Activated naive CD4-positive, alpha-beta T cell treated with anti-CD3 and anti-CD28 coated beads for 36 hours (primary cell): ENCODE measurements at regions of chr3 and their contacts with region 1.

Region 1: GRCh38 chr3:102229062-102229655 is 205.7 kb upstream of the ZPLD1 start:
- DNase-seq: peak; percentile 88
- H3K4me3 Mint-ChIP-seq: no peak overlapping the region
- H3K27ac Mint-ChIP-seq: no peak overlapping the region
- H3K4me1 Mint-ChIP-seq: peaks cover 16% of the 10 kb centered on the region
- H3K27me3 Mint-ChIP-seq: no peaks in the 10 kb centered on the region

Region 2: DNA sequence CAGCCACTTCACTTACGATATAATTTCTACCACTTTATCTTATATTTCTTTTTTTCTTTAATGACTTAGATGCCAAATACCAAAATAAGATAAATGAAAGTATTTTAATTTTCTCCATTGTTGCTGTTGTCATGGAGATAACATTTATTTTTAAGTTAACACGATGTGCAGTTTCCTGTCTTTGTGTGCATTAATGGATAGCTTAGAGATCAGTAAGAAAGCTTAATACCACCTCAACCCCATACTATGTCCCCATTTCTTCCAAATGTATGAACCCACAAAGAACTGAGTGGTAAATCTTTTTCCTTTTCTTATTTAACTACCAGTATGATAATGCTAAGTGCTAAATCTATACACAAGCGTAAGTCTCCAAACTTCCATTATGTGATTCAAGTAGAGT is 638.1 kb before region 1 on chr3:
- CTCF ChIA-PET with region 1: no interaction called
- intact Hi-C with region 1: no loop called
- DNase-seq: no peak
- H3K4me3 Mint-ChIP-seq: no peak overlapping the region
- H3K27ac Mint-ChIP-seq: peak overlapping the region; percentile 30
- H3K4me1 Mint-ChIP-seq: peaks cover 13% of the 10 kb centered on the region
- H3K27me3 Mint-ChIP-seq: no peaks in the 10 kb centered on the region

Region 3: DNA sequence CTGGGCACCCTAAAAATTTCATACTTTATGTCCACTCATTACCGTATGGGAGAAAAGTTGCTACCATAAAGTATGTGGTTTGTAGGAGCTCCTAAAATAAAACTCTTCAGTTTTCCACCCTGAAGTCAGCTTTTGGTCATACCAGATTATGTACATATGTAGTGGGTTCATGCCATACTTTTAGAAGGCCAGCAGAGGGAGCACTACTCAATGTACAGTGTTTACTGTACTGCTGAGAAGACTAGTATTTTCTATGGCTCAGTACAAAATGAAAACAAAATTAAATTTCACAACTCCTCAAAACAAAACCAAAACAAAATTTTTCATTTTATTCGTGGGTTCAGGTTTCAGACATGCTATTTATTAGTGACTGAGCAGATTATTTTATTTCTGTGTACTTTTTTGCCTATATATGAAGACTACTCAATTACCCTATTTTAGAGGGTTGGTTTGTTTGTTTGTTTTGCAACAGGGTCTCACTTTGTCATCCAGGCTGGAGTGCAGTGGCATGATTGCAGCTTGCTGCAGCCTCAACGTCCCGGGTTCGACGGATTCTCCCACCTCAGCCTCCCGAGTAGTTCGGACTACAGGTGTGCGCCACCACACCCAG is 425.9 kb before region 1 on chr3:
- CTCF ChIA-PET with region 1: interaction called, 380 read pairs
- intact Hi-C with region 1: no loop called
- DNase-seq: peak; percentile 76
- H3K4me3 Mint-ChIP-seq: no peak overlapping the region
- H3K27ac Mint-ChIP-seq: peak overlapping the region; percentile 50
- H3K4me1 Mint-ChIP-seq: peaks cover 37% of the 10 kb centered on the region
- H3K27me3 Mint-ChIP-seq: no peaks in the 10 kb centered on the region

Region 4: GRCh38 chr3:101821503-101821902 is 407.7 kb before region 1 on chr3:
- CTCF ChIA-PET with region 1: interaction called, 13 read pairs
- intact Hi-C with region 1: no loop called
- DNase-seq: no peak
- H3K4me3 Mint-ChIP-seq: no peak overlapping the region
- H3K27ac Mint-ChIP-seq: no peak overlapping the region
- H3K4me1 Mint-ChIP-seq: peaks cover 53% of the 10 kb centered on the region
- H3K27me3 Mint-ChIP-seq: no peaks in the 10 kb centered on the region

Region 5: GRCh38 chr3:101995371-101996046 is 233.7 kb before region 1 on chr3:
- CTCF ChIA-PET with region 1: interaction called, 4 read pairs
- intact Hi-C with region 1: loop called (anchors 2 kb)
- DNase-seq: no peak
- H3K4me3 Mint-ChIP-seq: no peak overlapping the region
- H3K27ac Mint-ChIP-seq: no peak overlapping the region
- H3K4me1 Mint-ChIP-seq: peaks cover 32% of the 10 kb centered on the region
- H3K27me3 Mint-ChIP-seq: no peaks in the 10 kb centered on the region

Region 6: DNA sequence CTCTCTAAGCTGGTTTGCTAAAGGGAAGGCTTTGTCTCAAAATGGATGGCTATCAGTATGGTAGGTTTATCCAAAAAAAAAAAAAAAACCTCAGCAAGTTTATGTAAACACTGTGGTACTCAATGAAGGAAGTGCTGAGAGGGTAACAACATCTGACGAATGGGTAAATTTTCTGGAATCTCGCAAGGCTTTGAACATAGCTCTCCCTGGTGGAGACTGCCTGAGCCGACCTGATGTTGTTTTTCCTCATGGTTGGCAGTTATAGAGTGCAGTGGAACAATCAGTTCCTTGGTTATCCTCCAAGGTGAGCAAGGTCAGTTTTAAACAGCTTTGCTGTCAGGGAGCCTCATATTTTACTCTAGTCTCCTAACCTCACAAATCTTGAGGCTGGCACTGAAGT is 300.3 kb after region 1 on chr3:
- CTCF ChIA-PET with region 1: interaction called, 146 read pairs
- intact Hi-C with region 1: no loop called
- DNase-seq: no peak
- H3K4me3 Mint-ChIP-seq: no peak overlapping the region
- H3K27ac Mint-ChIP-seq: no peak overlapping the region
- H3K4me1 Mint-ChIP-seq: no peaks in the 10 kb centered on the region
- H3K27me3 Mint-ChIP-seq: no peaks in the 10 kb centered on the region

Region 7: DNA sequence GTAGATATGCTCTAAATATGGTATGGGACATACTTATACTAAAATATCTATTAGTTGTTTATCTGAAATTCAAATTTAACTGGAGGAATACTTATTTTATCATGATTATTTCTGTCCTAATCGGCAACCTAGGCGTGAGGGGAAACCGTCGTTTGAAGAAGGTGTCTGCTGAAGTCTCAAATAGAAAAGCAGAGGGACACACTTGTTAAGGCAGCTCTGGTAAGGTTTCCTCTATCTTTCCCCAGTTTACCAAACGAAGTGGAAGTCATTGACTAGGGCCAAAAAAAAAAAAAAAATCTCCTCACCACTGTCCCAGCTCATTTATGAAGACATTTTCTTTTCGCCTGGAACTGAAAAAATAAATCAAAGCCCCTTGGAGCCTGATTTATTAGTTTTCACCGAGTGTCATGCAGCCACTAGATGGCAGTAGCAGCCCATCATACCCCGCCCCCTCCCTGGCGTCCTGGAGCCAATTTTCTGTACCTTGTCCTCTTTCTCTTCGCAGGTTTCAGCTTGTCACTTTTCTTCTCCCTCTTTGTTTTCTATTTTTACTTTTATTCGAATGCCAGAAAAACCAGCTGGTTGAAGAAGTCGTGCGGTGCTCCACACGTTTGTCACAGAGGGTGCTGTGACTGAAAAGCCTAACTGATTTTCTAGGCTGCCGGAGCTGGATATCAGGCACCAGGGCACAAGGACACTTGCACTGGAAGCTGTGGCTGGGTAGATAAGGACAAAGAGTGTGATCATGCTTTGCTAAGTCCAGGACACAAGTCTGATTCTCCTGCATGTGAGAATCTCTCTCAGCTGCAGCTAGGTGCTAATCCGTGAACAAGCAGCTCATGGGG is 444.3 kb after region 1 on chr3:
- CTCF ChIA-PET with region 1: interaction called, 11 read pairs
- intact Hi-C with region 1: loop called (anchors 2 kb)
- DNase-seq: peak; percentile 82
- H3K4me3 Mint-ChIP-seq: no peak overlapping the region
- H3K27ac Mint-ChIP-seq: no peak overlapping the region
- H3K4me1 Mint-ChIP-seq: peaks cover 4% of the 10 kb centered on the region
- H3K27me3 Mint-ChIP-seq: peaks cover 20% of the 10 kb centered on the region

Region 8: DNA sequence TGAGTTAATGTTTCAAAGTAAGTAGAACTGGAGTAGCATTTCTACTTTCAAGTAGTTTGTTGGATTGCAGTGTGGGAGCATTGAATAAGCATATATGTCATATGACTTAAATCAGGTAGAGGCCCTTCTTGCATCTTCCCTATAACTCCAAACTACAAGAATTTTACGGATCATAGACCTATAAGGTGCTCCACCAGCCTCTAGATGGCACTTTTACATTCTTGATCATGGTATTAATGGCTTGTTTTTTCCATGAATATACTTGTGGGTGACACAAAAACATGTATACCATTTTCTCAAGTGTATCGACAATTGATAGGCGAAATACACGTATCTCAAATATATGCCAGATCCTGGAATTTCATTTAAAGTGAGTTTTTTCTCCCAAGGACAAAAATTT is 516.7 kb after region 1 on chr3:
- CTCF ChIA-PET with region 1: no interaction called
- intact Hi-C with region 1: no loop called
- DNase-seq: no peak
- H3K4me3 Mint-ChIP-seq: no peak overlapping the region
- H3K27ac Mint-ChIP-seq: no peak overlapping the region
- H3K4me1 Mint-ChIP-seq: no peaks in the 10 kb centered on the region
- H3K27me3 Mint-ChIP-seq: no peaks in the 10 kb centered on the region